ENCODE measurements at regions of chr2 and their contacts with region 1.

Region 1: DNA sequence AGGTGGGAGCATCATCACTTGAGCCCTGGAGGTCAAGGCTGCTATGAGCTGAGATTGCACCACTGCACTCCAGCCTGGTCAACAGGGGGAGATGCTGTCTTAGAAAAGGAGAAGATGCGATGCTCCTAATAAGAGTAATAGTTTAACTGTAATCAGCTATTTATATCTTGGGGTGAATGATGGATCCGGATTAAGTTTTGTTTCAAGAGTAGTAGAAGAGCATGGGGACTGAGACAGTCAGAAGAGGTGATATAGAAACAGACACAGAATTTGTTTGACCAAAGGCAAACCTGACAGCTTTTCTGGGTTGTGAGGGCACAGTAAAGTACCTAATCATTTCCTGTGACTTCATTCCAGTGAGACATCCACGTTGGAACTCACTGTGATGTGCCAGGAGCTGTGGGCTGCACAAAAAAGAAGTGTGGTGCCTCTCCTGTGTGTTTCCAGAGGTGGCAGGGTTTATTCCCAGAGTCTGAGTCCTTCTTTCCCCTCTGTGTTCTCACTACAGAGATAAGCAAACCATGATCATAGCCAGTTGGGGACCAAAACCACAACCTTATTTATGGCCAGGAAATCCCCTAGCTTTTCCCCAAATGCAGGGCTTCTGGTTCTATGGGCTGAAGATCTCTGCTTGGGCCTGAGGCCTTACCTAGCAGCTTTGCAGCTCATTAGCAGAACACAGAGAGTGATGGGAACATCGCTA is 113.7 kb downstream of the XRCC5 start:
- DNase-seq: peak; percentile 29
- ATAC-seq: peak; percentile 58
- H3K4me3 Mint-ChIP-seq: no peak overlapping the region
- H3K27ac Mint-ChIP-seq: peak overlapping the region; percentile 36
- H3K4me1 Mint-ChIP-seq: peaks cover 34% of the 10 kb centered on the region
- H3K27me3 Mint-ChIP-seq: no peaks in the 10 kb centered on the region
- CTCF ChIP-seq: no peak

Region 2: DNA sequence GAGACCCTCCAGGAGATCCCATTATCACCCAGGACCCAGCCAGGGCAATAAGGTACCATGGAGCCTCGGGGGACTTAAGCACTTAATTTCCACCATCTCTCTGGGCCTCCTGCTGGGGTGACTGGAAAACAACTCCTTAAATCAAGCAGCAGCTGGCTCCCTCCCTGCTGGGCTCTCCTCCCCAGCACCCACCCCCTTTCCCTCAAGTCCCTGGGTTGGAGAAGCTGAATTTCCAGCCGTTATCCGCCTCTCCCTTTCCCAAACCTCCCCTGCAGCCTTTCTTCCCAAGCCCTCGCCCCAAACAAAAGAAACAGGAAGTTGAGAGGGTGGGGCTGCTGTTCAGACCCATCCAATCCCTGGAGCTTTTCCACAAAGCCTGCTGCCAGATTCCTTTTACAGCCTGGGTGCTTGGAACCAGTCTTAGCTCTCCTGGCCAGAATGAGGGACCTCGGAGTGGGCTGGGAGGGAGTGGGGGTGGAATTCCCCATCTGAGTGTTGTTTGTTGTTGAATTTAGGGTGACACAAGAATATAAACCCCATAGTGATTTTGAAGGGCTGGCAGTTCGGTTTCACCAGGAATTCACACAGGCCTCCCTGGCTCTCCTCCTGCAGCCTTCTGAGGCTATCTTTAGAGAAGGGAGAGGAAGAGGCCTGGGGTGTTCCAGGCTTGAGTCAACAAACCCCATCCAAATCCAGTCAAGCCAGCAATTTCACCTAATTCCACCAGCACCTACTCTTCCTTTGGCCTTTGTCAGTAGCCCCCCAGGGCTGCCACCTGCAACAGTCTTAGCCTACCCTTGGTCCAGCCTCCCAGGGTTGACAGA is 117.2 kb after region 1 on chr2:
- CTCF ChIA-PET with region 1: no interaction called
- POLR2A ChIA-PET with region 1: no interaction called
- intact Hi-C with region 1: loop called (anchors 10 kb)
- DNase-seq: no peak
- ATAC-seq: no peak
- H3K4me3 Mint-ChIP-seq: no peak overlapping the region
- H3K27ac Mint-ChIP-seq: no peak overlapping the region
- H3K4me1 Mint-ChIP-seq: peaks cover 14% of the 10 kb centered on the region
- H3K27me3 Mint-ChIP-seq: no peaks in the 10 kb centered on the region
- CTCF ChIP-seq: no peak

Measured in activated CD8-positive, alpha-beta T cell treated with anti-CD3 and anti-CD28 coated beads for 36 hours (primary cell).